ENCODE measurements at regions of chr4 and their contacts with region 1.

Region 1: DNA sequence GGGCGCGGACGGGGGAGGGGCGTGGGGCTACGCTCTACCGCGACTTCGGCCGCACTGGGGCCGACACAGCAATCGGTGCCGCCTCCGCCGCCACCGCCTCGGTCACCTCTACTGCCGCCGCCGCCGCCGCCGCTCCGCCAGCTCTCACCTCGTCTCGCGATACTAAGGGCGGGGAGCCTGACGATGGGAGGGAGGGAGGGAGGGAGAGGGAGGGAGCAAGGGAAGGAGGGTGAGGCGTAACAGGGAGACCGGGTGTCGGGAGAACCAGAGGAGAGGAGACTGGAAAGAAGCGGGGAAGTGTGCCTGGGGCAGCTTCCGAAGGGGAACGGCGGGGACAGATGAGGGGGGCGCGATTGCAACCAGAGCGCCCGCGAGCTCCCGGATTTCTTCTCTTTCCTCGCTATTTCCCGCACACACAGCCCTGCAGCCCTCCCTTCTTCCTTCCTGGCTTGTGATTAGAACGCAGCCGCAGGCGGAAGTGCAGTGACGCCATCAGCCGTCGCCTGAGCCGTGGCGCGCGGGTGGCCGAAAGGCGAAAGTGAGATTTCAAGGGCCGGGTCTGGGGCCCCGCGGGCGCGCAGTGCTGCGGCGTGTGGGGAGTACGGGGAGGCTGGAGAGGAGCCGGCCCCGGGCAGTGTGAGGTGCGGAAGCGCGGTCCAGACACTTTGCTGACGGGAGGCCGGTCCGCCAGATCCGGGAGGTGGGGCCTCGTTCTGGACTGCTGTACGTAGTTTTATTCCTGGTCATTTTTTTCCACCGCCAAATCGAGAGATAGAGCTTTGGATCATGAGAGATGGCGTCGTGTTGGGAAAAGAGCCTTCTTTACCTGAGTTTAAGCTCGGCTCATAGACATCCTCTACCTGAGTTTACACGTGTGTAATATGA is at the start of gene ANKRD17:
- DNase-seq: peak; percentile 80
- H3K4me3 ChIP-seq: peak within 1 kb of the TSS; percentile 94
- H3K27ac ChIP-seq: peak within 1 kb of the TSS; percentile 99
- H3K27me3 ChIP-seq: no peaks in the 10 kb centered on the region
- CTCF ChIP-seq: no peak; the same call in none of the 2 replicates
- polyA plus RNA-seq, gene ANKRD17: 58.2 and 71.1 TPM in 2 replicates

Region 2: DNA sequence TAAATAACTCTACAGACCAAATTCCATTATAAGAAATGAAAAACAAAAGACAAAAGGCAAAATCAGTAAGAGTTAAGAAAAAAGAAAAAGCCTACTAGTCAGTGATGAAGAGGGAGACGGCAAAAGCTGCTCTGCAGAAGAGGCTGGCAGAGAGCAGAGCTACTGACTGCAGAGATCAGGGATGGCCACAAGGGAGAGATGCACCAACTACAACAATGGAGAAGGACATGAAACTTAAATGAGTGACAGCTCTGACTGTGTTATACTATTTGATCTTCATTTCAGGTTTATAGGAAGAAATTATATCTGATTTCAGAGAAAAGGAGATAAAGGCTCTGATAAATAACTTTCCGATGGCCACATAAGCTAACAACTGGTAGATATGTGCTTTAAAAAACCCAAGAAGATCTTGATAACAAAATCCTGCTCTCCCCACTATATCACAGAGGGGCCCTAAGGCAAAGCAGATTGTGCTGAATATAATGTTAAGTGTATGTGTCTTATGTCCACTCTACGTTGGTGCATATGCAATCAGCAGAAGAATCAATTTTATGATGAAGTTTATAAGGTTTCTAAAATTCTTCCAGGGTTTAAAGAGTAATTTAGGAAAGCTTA is 131.0 kb before region 1 on chr4:
- CTCF ChIA-PET with region 1: interaction called, 34 read pairs
- POLR2A ChIA-PET with region 1: no interaction called
- DNase-seq: no peak
- H3K4me3 ChIP-seq: no peak overlapping the region
- H3K27ac ChIP-seq: no peak overlapping the region
- H3K27me3 ChIP-seq: no peaks in the 10 kb centered on the region
- CTCF ChIP-seq: peak; percentile 35; the same call in 1 of the 2 replicates

Region 3: DNA sequence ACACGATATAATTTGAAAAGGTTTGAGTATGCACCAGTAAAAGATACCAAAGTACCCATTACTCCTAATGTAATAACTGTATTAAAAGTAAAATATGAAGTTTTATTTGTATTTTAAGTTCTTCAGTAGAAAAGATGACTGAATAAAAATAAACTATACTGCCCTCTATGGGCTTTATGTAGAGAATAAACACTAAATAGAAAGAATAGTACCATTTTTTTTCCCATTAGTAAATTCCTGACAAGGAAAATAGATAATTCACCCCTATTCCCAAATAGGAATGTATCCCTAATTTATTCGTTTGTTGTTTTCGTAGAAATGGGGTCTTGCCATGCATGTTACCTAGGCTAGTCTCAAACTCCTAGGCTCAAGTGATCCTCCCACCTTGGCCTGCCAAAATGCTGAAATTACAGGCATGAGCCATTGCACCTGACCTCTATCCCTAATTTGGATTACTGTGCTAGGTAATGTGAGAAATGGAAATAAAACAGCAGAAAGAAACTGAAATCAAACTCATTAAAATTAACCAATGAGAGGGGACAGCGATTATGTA is 115.9 kb before region 1 on chr4:
- CTCF ChIA-PET with region 1: interaction called, 22 read pairs
- POLR2A ChIA-PET with region 1: no interaction called
- DNase-seq: no peak
- H3K4me3 ChIP-seq: no peak overlapping the region
- H3K27ac ChIP-seq: no peak overlapping the region
- H3K27me3 ChIP-seq: no peaks in the 10 kb centered on the region
- CTCF ChIP-seq: peak; percentile 25

Region 4: DNA sequence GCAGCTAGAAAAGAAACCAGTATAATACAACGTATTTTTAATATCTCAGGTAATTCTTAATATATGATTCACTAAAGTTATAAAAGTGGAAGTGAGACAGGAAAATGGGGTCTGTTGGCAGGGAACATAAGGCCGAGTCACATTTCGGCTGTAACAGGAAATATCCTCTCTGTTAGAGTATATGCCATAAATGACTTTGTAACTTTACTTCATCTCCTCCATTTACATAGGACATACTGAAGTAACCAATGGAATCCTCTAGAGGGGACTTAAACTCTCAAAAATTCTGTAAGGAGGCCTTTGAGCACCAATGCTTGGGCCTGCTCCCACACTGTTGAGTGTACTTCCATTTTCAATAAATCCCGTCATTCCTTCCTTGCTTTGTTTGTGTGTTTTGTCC is 71.6 kb before region 1 on chr4:
- CTCF ChIA-PET with region 1: no interaction called
- POLR2A ChIA-PET with region 1: no interaction called
- DNase-seq: no peak
- H3K4me3 ChIP-seq: no peak overlapping the region
- H3K27ac ChIP-seq: no peak overlapping the region
- H3K27me3 ChIP-seq: no peaks in the 10 kb centered on the region
- CTCF ChIP-seq: no peak

Region 5: GRCh38 chr4:73248821-73249220 is 10.1 kb before region 1 on chr4:
- CTCF ChIA-PET with region 1: interaction called, 10 read pairs
- POLR2A ChIA-PET with region 1: no interaction called
- DNase-seq: no peak
- H3K4me3 ChIP-seq: no peak overlapping the region
- H3K27ac ChIP-seq: no peak overlapping the region
- H3K27me3 ChIP-seq: no peaks in the 10 kb centered on the region
- CTCF ChIP-seq: no peak